Activated CD4-positive, alpha-beta T cell treated with anti-CD3 and anti-CD28 coated beads for 36 hours (primary cell): ENCODE measurements at regions of chrX and their contacts with region 1.

Region 1: DNA sequence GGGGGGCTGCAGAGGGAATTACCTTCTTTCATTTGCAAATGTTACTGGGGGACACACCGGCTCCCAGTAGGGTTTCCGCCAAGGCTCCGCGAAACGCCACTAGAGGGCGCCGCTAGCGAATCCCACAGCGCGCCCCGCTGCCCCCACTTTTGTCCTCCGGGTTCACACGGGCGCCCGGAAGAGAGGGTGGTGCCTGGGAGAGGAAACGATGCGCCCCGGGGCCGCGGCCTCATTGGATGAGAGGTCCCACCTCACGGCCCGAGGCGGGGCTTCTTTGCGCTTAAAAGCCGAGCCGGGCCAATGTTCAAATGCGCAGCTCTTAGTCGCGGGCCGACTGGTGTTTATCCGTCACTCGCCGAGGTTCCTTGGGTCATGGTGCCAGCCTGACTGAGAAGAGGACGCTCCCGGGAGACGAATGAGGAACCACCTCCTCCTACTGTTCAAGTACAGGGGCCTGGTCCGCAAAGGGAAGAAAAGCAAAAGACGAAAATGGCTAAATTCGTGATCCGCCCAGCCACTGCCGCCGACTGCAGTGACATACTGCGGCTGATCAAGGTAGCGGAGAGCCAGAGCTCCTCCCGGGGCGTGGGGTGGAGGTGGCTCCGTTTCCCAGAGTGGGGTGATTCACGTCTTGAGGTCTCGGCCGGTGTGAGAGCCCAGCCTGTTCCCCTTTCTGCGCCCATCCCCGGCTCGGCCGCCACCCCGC is at the start of gene SAT1:
- DNase-seq: peak; percentile 97
- ATAC-seq: peak; percentile 86
- H3K4me3 Mint-ChIP-seq: peak within 1 kb of the TSS; percentile 92
- H3K27ac Mint-ChIP-seq: peak within 1 kb of the TSS; percentile 97
- H3K4me1 Mint-ChIP-seq: peaks cover 28% of the 10 kb centered on the region
- H3K27me3 Mint-ChIP-seq: no peaks in the 10 kb centered on the region
- total RNA-seq, gene SAT1: 148 to 166 TPM

Region 2: DNA sequence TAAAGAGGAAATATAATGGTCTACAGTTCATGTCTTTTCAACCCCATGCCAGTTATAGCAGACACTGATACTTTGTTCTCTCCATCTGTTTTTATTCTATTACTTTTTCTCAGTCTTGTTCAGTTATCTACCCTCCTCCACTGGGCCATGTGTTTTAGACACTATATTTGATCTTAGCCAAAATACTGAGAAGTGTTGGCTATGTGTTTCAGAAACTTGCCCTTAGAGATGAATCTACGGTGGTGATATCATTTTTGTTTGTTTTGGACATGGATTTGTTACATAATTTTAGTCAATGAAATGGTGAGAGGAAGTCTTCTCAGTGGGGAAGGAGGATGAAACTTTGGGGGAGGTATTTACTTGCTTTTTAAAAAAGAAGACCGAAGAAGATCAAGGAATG is 994.8 kb before region 1 on chrX:
- CTCF ChIA-PET with region 1: no interaction called
- POLR2A ChIA-PET with region 1: no interaction called
- intact Hi-C with region 1: no loop called
- DNase-seq: no peak
- ATAC-seq: no peak
- H3K4me3 Mint-ChIP-seq: no peak overlapping the region
- H3K27ac Mint-ChIP-seq: no peak overlapping the region
- H3K4me1 Mint-ChIP-seq: no peaks in the 10 kb centered on the region
- H3K27me3 Mint-ChIP-seq: no peaks in the 10 kb centered on the region

Region 3: GRCh38 chrX:23548164-23548563 is 234.9 kb before region 1 on chrX:
- CTCF ChIA-PET with region 1: no interaction called
- POLR2A ChIA-PET with region 1: no interaction called
- intact Hi-C with region 1: no loop called
- DNase-seq: no peak
- ATAC-seq: no peak
- H3K4me3 Mint-ChIP-seq: no peak overlapping the region
- H3K27ac Mint-ChIP-seq: no peak overlapping the region
- H3K4me1 Mint-ChIP-seq: no peaks in the 10 kb centered on the region
- H3K27me3 Mint-ChIP-seq: no peaks in the 10 kb centered on the region

Region 4: GRCh38 chrX:23732704-23733103 is 50.3 kb before region 1 on chrX:
- CTCF ChIA-PET with region 1: interaction called, 6 read pairs
- POLR2A ChIA-PET with region 1: interaction called, 6 read pairs
- intact Hi-C with region 1: loop called (anchors 1 kb)
- DNase-seq: no peak
- ATAC-seq: peak; percentile 83
- H3K4me3 Mint-ChIP-seq: peak overlapping the region; percentile 39
- H3K27ac Mint-ChIP-seq: peak overlapping the region; percentile 89
- H3K4me1 Mint-ChIP-seq: peaks cover 36% of the 10 kb centered on the region
- H3K27me3 Mint-ChIP-seq: no peaks in the 10 kb centered on the region

Region 5: DNA sequence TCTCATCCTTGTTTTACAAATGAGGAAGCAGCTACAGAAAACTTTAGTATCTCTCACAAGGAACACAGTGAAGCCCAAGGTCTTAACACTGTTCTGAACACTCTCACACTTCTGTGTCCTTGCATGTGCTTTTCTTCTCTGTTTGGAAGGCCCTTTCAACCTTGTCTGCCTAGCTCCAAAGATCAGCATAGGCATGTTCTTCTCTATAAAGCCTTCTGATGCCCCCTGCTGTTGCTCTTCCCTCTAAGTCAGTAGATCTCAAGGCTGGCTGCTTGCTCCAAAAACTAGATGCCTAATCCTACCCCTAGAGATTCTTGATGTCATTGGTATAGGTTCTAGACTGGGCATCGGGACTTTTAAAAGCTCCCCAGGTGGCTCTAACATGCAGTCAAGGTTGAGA is 118.8 kb after region 1 on chrX:
- CTCF ChIA-PET with region 1: interaction called, 28 read pairs
- POLR2A ChIA-PET with region 1: interaction called, 4 read pairs
- intact Hi-C with region 1: loop called (anchors 1 to 2 kb)
- DNase-seq: peak; percentile 48
- ATAC-seq: peak; percentile 82
- H3K4me3 Mint-ChIP-seq: no peak overlapping the region
- H3K27ac Mint-ChIP-seq: no peak overlapping the region
- H3K4me1 Mint-ChIP-seq: peaks cover 7% of the 10 kb centered on the region
- H3K27me3 Mint-ChIP-seq: no peaks in the 10 kb centered on the region

Region 6: GRCh38 chrX:24024819-24025740 is 242.1 kb after region 1 on chrX:
- CTCF ChIA-PET with region 1: no interaction called
- POLR2A ChIA-PET with region 1: interaction called, 3 read pairs
- intact Hi-C with region 1: loop called (anchors 1 kb)
- DNase-seq: peak; percentile 91
- ATAC-seq: peak; percentile 89
- H3K4me3 Mint-ChIP-seq: peak overlapping the region; percentile 83
- H3K27ac Mint-ChIP-seq: peak overlapping the region; percentile 58
- H3K4me1 Mint-ChIP-seq: peaks cover 19% of the 10 kb centered on the region
- H3K27me3 Mint-ChIP-seq: no peaks in the 10 kb centered on the region

Region 7: DNA sequence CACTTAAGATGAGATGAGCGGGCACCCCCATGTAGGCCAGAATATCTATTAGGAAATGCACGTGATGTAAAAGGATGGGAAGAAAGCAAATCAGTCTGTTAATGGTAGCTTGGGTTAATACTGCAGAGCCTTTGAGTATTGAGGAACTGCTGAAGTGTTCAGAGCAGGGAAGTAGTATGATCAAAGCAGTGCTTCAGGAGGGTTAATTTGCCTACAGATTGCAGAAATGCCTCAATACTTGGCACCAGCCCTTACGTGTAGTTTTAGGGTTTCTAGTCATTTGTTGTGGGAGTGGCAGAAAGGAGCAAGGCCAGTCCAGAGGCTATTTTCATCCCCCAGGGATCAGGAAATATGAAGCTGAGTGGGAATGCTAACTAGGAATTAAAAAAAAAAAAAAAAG is 386.2 kb after region 1 on chrX:
- CTCF ChIA-PET with region 1: no interaction called
- POLR2A ChIA-PET with region 1: no interaction called
- intact Hi-C with region 1: loop called in 1 of 2 experiments (anchors 5 kb)
- DNase-seq: no peak
- ATAC-seq: peak; percentile 59
- H3K4me3 Mint-ChIP-seq: no peak overlapping the region
- H3K27ac Mint-ChIP-seq: peak overlapping the region; percentile 90
- H3K4me1 Mint-ChIP-seq: peaks cover 60% of the 10 kb centered on the region
- H3K27me3 Mint-ChIP-seq: no peaks in the 10 kb centered on the region